Heart right ventricle (tissue), 16 donors: ENCODE measurements at regions of chr15 and their contacts with region 1.

Region 1: GRCh38 chr15:25508369-25509002 is 69.7 kb upstream of the UBE3A start:
- DNase-seq: peak in 1 of 2 donors; percentile 13
- ATAC-seq: peak in 3 of 8 donors; percentile 27 to 57 (median 30)
- H3K4me3 ChIP-seq: no peak overlapping the region
- H3K27ac ChIP-seq: no peak overlapping the region
- H3K4me1 ChIP-seq: no peaks in the 10 kb centered on the region
- H3K27me3 ChIP-seq: no peaks in the 10 kb centered on the region
- CTCF ChIP-seq: peak; percentile 38 to 84 (median 68)

Region 2: GRCh38 chr15:25693321-25694237 is 185.1 kb after region 1 on chr15:
- intact Hi-C with region 1: loop called in 8 of 10 experiments (anchors 1 to 10 kb)
- DNase-seq: peak in 1 of 2 donors; percentile 54
- ATAC-seq: peak in 7 of 8 donors; percentile 50 to 66 (median 61)
- H3K4me3 ChIP-seq: no peak overlapping the region
- H3K27ac ChIP-seq: no peak overlapping the region
- H3K4me1 ChIP-seq: peaks cover 0 to 14% (median 3%) of the 10 kb centered on the region in 9 donors
- H3K27me3 ChIP-seq: no peaks in the 10 kb centered on the region
- CTCF ChIP-seq: peak; percentile 17 to 68 (median 62)

Region 3: GRCh38 chr15:25933456-25934158 is 425.1 kb after region 1 on chr15:
- intact Hi-C with region 1: loop called in 8 of 10 experiments (anchors 2 to 10 kb)
- DNase-seq: peak; percentile 51 to 70
- ATAC-seq: peak; percentile 81 to 94 (median 88)
- H3K4me3 ChIP-seq: peak overlapping the region in 7 of 10 donors; percentile 7 to 31 (median 23)
- H3K27ac ChIP-seq: no peak overlapping the region
- H3K4me1 ChIP-seq: peaks cover 0 to 7% (median 0%) of the 10 kb centered on the region in 9 donors
- H3K27me3 ChIP-seq: peaks cover 0 to 7% (median 0%) of the 10 kb centered on the region in 7 donors
- CTCF ChIP-seq: peak; percentile 44 to 74 (median 66)

Region 4: DNA sequence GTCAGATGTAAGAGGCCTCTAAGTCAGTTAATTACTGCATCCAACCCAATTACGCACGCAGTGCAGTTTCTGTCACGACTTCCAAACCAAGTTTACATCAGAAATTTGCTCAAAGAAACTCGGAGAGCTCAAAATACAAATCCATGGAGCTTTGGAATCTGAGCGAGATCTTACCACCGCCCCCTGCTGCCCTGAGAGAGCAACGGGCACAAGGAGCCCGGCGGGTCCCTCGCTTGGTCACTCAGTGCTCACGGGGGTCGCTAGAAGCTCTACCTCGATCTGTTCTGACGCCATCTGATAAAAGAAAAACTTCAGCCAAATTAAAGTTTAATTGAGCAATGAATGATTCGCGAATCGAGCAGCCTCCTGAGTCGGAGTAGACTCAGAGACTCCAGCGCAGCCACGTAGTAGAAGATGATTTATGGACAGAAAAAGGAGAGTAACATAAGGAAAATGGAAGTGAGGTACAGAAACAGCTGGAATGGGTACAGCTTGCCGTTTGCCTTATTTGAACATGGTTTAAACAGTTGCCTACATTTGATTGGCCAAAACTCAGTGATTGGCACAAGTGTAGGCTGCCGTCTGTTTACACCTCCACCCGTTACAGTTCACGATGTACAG is 587.3 kb after region 1 on chr15:
- intact Hi-C with region 1: loop called in 1 of 10 experiments (anchors 5 kb)
- DNase-seq: no peak
- ATAC-seq: no peak
- H3K4me3 ChIP-seq: no peak overlapping the region
- H3K27ac ChIP-seq: no peak overlapping the region
- H3K4me1 ChIP-seq: no peaks in the 10 kb centered on the region
- H3K27me3 ChIP-seq: peaks cover 0 to 31% (median 16%) of the 10 kb centered on the region in 7 donors
- CTCF ChIP-seq: peak in 4 of 9 donors; percentile 8 to 33 (median 17)

Region 5: DNA sequence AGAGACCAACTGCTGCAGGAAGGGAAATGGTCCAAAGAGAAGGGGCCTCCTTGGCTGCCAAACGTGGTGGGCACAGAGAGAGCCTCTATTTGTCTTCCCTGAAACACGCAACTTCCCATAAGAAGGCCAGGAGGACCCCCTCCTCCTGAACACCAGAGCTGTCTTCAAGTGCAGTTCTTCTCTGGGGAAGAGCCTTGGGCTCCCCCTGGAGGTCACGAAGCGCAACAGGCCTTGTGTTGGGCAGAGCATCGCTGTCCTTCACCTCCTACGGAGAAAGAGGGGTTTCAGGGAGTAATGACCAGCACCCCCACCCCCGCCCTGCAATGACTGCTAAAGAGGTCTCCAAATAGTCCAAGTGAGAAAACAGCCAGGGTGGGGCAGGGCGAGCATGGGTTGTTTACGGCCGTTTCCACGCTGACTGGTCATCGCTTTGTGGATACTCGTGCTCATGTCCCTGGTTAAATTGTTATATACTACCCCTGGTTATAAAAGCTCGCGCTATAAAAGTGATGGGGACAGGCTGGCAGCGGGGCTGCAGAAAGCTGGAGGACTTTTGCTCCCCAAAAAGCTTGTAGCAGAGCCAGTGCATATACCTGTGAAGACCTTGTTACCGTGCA is 752.1 kb after region 1 on chr15:
- intact Hi-C with region 1: loop called in 7 of 10 experiments (anchors 5 to 10 kb)
- DNase-seq: peak in 1 of 2 donors; percentile 17
- ATAC-seq: peak in 2 of 8 donors; percentile 19 to 26
- H3K4me3 ChIP-seq: no peak overlapping the region
- H3K27ac ChIP-seq: peak overlapping the region in 5 of 10 donors; percentile 14 to 73 (median 65)
- H3K4me1 ChIP-seq: no peaks in the 10 kb centered on the region
- H3K27me3 ChIP-seq: peaks cover 0 to 2% (median 0%) of the 10 kb centered on the region in 7 donors
- CTCF ChIP-seq: peak; percentile 27 to 72 (median 64)

Region 6: GRCh38 chr15:26864664-26865191 is 1356.2 kb after region 1 on chr15:
- intact Hi-C with region 1: loop called in 7 of 10 experiments (anchors 5 to 10 kb)
- DNase-seq: peak in 1 of 2 donors; percentile 11
- ATAC-seq: peak; percentile 58 to 80 (median 70)
- H3K4me3 ChIP-seq: no peak overlapping the region
- H3K27ac ChIP-seq: no peak overlapping the region
- H3K4me1 ChIP-seq: peaks cover 0 to 7% (median 0%) of the 10 kb centered on the region in 9 donors
- H3K27me3 ChIP-seq: peaks cover 17 to 52% (median 45%) of the 10 kb centered on the region in 7 donors
- CTCF ChIP-seq: peak; percentile 14 to 66 (median 55)